ENCODE measurements at regions of chr21 and their contacts with region 1.

Region 1: DNA sequence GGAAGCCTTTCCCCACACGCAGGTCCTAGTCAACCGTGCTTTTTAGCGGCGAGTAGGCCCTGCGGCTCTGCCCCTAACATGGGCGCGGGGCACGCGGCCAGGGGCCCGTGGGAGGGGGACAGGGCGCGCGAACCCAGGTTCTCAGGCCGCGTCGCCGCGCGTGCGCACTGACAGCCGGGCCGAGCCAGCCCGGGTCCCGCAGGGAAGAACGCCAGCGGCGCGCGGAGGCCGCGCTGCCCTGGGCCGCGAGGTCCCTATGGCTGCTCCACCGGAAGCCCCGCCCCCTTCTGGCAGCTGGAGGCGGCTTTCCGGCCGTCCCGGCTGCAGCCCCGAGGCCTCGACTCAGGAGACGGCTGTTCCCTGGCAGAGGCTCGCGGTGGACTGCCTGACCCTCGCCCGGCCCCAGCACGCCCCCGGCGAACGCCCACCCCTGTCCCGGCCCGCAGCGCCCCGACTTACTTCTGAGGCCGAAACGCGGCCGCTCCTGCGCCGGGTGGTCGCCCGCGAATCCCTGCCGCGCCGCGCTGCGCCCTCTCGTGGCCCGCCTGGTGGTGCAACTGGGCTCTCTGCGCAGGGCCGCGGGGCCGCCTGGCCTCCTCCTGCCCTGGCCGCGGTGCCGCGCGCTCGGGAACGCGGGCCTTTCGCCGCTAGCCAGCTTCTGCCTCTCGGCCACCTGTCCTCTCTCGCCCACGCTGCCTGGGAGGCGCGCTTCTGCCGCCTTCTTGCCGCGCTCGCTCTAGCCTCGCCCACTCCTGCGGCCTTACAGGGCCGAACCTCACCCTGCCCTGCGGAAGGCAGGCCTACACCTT is 16.6 kb upstream of the RIPPLY3 start:
- DNase-seq: peak; percentile 86
- H3K4me3 Mint-ChIP-seq: peak overlapping the region; percentile 78
- H3K27ac Mint-ChIP-seq: peak overlapping the region; percentile 89
- H3K4me1 Mint-ChIP-seq: peaks cover 28% of the 10 kb centered on the region
- H3K27me3 Mint-ChIP-seq: no peaks in the 10 kb centered on the region

Region 2: GRCh38 chr21:36354918-36355680 is 634.8 kb before region 1 on chr21:
- intact Hi-C with region 1: no loop called
- DNase-seq: no peak
- H3K4me3 Mint-ChIP-seq: no peak overlapping the region
- H3K27ac Mint-ChIP-seq: no peak overlapping the region
- H3K4me1 Mint-ChIP-seq: no peaks in the 10 kb centered on the region
- H3K27me3 Mint-ChIP-seq: no peaks in the 10 kb centered on the region

Region 3: GRCh38 chr21:36976882-36977651 is 12.8 kb before region 1 on chr21:
- intact Hi-C with region 1: loop called (anchors 1 kb)
- DNase-seq: no peak
- H3K4me3 Mint-ChIP-seq: no peak overlapping the region
- H3K27ac Mint-ChIP-seq: peak overlapping the region; percentile 48
- H3K4me1 Mint-ChIP-seq: peaks cover 21% of the 10 kb centered on the region
- H3K27me3 Mint-ChIP-seq: peaks cover 6% of the 10 kb centered on the region

Measured in activated T-helper 2 cell treated with anti-CD3 and anti-CD28 coated beads, Interferon-gamma antibody, Interleukin-2, Interleukin-4, amounts not matched to agents 10 μg/mL and 5 μg/mL and 100 μg/mL, durations not matched to agents 14 hours and 24 hours and 36 hours (primary cell).